ENCODE measurements at regions of chr17 and their contacts with region 1.

Region 1: DNA sequence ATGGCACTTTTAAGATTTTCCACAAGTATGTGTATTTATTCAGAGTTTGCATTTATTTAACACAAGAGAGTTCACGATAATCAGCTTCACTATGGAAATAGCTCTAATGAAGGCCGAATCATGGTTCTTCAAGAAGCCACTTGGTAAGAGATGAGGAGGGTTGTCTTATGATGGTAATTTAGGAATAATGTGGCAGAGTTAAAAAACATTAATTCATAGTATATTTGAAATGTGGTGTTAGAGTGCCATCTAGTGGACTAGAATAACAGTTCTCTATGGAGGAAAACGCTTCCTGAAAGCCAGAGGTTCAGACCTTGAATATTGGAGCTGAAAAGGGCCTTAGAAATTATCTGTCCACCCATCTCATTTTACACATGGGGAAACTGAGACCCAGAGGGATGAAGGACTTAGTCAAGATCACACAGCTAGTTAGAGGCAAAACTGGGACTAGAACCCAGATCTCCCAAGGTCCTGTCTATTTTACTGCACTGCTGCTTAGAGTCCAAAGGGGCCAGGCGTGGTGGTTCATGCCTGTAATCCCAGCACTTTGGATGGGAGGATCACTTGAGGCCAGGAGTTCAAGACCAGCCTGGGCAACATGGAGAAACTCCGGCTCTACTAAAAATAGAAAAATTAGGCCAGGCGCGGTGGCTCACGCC is 33.8 kb upstream of the KPNB1 start:
- DNase-seq: no peak
- ATAC-seq: peak in 3 of 4 donors; percentile 43 to 64 (median 62)
- H3K4me3 ChIP-seq: no peak overlapping the region
- H3K27ac ChIP-seq: no peak overlapping the region
- H3K4me1 ChIP-seq: peaks cover 15% of the 10 kb centered on the region
- H3K27me3 ChIP-seq: no peaks in the 10 kb centered on the region
- CTCF ChIP-seq: peak; percentile 70

Region 2: GRCh38 chr17:47229535-47230443 is 386.1 kb before region 1 on chr17:
- intact Hi-C with region 1: loop called in 1 of 2 experiments (anchors 10 kb)
- DNase-seq: peak; percentile 80 to 88
- ATAC-seq: peak; percentile 83 to 95 (median 92)
- H3K4me3 ChIP-seq: peak overlapping the region; percentile 50
- H3K27ac ChIP-seq: no peak overlapping the region
- H3K4me1 ChIP-seq: peaks cover 6% of the 10 kb centered on the region
- H3K27me3 ChIP-seq: no peaks in the 10 kb centered on the region
- CTCF ChIP-seq: peak; percentile 98

Region 3: DNA sequence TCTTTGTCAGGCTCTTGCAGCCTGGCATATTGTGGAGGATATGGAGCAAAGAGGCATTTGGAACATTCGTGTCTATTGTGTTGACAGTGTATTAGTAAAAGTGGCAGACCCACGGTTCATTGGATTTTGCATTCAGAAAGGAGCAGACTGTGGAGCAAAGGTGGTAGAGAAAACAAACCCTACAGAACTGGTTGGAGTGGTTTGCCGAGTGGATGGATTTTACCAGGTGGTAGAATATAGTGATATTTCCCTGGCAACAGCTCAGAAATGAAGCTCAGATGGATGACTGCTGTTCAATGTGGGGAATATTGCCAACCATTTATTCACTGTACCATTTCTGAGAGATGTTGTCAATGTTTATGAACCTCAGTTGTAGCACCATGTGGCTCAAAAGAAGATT is 247.6 kb before region 1 on chr17:
- intact Hi-C with region 1: loop called in 1 of 2 experiments (anchors 10 kb)
- DNase-seq: no peak
- ATAC-seq: no peak
- H3K4me3 ChIP-seq: no peak overlapping the region
- H3K27ac ChIP-seq: no peak overlapping the region
- H3K4me1 ChIP-seq: no peaks in the 10 kb centered on the region
- H3K27me3 ChIP-seq: no peaks in the 10 kb centered on the region
- CTCF ChIP-seq: no peak

Measured in psoas muscle (tissue), 8 donors.